ENCODE measurements at regions of chr16 and their contacts with region 1.

Region 1: GRCh38 chr16:68528686-68529379 is 10.3 kb upstream of the ZFP90 start:
- H3K4me3 ChIP-seq: no peak overlapping the region
- H3K27ac ChIP-seq: no peak overlapping the region
- H3K4me1 ChIP-seq: no peaks in the 10 kb centered on the region
- CTCF ChIP-seq: peak; percentile 93

Region 2: GRCh38 chr16:68512183-68512582 is 16.6 kb before region 1 on chr16:
- CTCF ChIA-PET with region 1: interaction called, 11 read pairs
- POLR2A ChIA-PET with region 1: no interaction called
- H3K4me3 ChIP-seq: no peak overlapping the region
- H3K27ac ChIP-seq: no peak overlapping the region
- H3K4me1 ChIP-seq: no peaks in the 10 kb centered on the region
- CTCF ChIP-seq: no peak

Measured in HEK293 (cell line).